ENCODE measurements at regions of chr11 and their contacts with region 1.

Region 1: GRCh38 chr11:124070915-124071635 is 29.9 kb upstream of the OR10G7 start:
- DNase-seq: peak; percentile 59 to 60
- ATAC-seq: peak in 3 of 8 donors; percentile 47 to 57 (median 50)
- H3K4me3 ChIP-seq: no peak overlapping the region
- H3K27ac ChIP-seq: peak overlapping the region in 1 of 10 donors; percentile 18
- H3K4me1 ChIP-seq: peaks cover 0 to 23% (median 4%) of the 10 kb centered on the region in 9 donors
- H3K27me3 ChIP-seq: peaks cover 0 to 78% (median 48%) of the 10 kb centered on the region in 7 donors
- CTCF ChIP-seq: peak; percentile 55 to 90 (median 77)

Region 2: DNA sequence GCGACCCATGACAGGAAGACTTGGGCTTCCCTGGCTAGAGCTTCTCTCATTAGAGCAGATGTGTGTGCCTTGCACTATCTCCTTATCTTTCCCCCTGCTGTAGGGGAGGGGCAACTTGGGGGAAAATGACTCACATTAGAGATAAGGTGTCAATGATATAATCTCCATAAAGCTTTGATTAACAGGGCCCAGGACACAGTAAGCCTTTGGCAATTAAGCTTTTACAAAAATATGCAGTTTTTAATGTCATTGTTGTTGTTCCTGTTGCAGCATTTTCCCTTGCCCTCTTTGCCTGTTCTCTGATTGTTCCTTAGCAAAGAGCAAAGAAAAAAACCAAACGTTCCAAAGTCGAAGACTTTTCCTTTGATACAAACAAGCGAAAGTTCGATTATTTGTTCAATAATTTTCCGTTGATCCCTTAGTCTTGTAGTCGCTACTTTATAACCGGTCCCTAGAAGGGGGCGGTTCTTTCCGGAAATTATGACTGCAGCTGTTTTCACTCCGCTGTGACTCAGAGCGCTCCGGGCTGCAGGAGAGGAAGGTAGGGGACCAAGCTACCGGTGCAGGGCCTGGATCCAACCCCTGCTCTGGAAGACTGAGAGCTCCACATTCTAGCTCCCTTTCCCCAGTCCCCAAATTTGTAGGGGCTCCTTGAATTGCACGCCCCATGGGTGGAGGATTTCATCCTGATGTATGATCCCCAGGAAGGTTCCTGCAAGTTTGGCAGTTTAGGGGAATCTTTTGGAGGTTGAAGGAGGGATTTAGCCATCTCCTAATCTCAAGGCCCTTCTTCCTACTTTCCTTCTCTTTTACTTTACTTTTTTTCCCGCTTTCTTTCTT is 44.1 kb after region 1 on chr11 and contains the start of gene VWA5A:
- intact Hi-C with region 1: no loop called
- DNase-seq: peak; percentile 49 to 82
- ATAC-seq: peak; percentile 93 to 99 (median 97)
- H3K4me3 ChIP-seq: peak within 1 kb of the TSS; percentile 7 to 72 (median 59)
- H3K27ac ChIP-seq: peak within 1 kb of the TSS in 6 of 10 donors; percentile 2 to 77 (median 37)
- H3K4me1 ChIP-seq: peaks cover 0 to 27% (median 11%) of the 10 kb centered on the region in 9 donors
- H3K27me3 ChIP-seq: peaks cover 0 to 10% (median 0%) of the 10 kb centered on the region in 7 donors
- CTCF ChIP-seq: no peak
- total RNA-seq, gene VWA5A: 1.6 to 8.8 (median 3.6) TPM

Region 3: DNA sequence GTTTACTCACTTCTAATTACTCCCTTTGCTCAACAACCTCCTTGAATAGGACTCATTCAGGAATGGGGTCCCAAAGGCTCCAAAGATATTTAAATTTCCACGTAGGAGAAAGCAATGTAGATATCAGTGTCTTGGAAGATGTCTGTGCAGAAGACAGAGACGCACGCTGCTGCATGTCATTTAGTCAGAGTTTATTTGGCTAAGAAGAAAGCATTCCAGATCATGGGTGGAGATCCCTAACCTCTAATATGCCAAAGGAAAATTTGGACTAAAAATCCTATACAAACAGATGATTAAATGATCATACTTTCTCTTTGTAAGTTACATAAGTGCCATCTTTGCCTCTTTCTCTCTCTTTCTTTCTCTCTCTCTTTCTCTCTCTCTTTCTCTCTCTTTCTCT is 112.0 kb after region 1 on chr11 and contains the start of gene OR10D3:
- intact Hi-C with region 1: loop called in 1 of 10 experiments (anchors 10 kb)
- DNase-seq: no peak
- ATAC-seq: no peak
- H3K4me3 ChIP-seq: no peak within 1 kb of the TSS
- H3K27ac ChIP-seq: no peak within 1 kb of the TSS
- H3K4me1 ChIP-seq: no peaks in the 10 kb centered on the region
- H3K27me3 ChIP-seq: peaks cover 0 to 2% (median 0%) of the 10 kb centered on the region in 7 donors
- CTCF ChIP-seq: no peak
- total RNA-seq, gene OR10D3: not detected

Region 4: DNA sequence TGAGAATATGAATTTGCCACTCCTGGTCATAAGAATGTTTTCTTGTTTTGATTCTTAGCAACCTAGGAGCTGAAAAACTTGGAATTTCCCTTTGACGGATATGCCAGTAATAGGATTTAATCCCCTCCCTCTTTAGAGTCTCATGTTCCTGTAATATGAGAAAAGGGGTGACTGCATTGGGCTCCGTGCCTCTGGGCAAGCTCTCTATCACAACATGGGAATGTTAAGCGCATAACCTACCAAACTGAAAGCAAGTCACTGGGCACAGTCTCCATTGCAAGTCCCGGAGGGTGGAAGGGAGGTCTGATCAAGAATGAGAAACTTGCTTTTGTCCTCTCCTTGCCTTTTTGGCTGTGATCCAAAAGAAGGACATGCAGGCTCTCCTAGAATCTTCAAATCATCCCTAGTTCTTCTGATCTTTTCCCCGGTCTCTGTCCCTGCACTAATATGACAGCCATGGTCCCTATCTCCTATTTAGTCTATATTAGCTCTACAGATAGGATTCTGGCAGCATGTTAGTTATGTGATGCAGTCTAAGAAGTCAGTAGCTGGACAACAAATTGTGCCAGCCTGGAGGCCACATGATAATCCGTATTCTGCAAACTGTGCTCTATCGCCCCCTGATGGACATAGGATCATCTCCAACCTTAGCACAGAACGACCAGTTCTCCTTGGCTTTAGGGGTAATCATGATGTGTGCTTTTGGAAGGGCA is 123.8 kb after region 1 on chr11:
- intact Hi-C with region 1: loop called in 6 of 10 experiments (anchors 2 to 10 kb)
- DNase-seq: no peak
- ATAC-seq: peak in 1 of 8 donors; percentile 68
- H3K4me3 ChIP-seq: no peak overlapping the region
- H3K27ac ChIP-seq: no peak overlapping the region
- H3K4me1 ChIP-seq: peaks cover 0 to 6% (median 0%) of the 10 kb centered on the region in 9 donors
- H3K27me3 ChIP-seq: peaks cover 0 to under 1% (median 0%) of the 10 kb centered on the region in 7 donors
- CTCF ChIP-seq: peak in 8 of 9 donors; percentile 9 to 68 (median 40)

Region 5: DNA sequence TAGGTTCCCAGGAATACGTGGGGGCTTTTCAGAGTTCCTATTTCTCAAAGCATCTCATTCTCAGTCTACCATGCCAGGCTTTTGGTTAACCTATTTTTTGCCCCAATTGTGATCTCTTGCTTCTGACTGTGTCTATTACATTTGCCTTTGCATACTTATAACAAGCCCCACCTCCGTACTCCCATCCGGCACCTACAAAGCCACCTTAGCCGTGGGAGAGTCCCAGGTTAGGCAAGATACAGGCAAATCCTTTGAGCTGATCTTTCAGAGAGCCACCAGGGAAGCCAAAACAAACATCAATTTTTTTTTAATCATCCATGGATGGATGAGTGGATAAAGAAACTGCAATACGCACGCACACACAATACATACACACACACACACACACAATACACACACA is 521.6 kb after region 1 on chr11:
- intact Hi-C with region 1: loop called in 9 of 10 experiments (anchors 5 to 10 kb)
- DNase-seq: no peak
- ATAC-seq: no peak
- H3K4me3 ChIP-seq: no peak overlapping the region
- H3K27ac ChIP-seq: no peak overlapping the region
- H3K4me1 ChIP-seq: no peaks in the 10 kb centered on the region
- H3K27me3 ChIP-seq: peaks cover 0 to 22% (median 4%) of the 10 kb centered on the region in 7 donors
- CTCF ChIP-seq: no peak